ENCODE measurements at regions of chr7 and their contacts with region 1.

Region 1: DNA sequence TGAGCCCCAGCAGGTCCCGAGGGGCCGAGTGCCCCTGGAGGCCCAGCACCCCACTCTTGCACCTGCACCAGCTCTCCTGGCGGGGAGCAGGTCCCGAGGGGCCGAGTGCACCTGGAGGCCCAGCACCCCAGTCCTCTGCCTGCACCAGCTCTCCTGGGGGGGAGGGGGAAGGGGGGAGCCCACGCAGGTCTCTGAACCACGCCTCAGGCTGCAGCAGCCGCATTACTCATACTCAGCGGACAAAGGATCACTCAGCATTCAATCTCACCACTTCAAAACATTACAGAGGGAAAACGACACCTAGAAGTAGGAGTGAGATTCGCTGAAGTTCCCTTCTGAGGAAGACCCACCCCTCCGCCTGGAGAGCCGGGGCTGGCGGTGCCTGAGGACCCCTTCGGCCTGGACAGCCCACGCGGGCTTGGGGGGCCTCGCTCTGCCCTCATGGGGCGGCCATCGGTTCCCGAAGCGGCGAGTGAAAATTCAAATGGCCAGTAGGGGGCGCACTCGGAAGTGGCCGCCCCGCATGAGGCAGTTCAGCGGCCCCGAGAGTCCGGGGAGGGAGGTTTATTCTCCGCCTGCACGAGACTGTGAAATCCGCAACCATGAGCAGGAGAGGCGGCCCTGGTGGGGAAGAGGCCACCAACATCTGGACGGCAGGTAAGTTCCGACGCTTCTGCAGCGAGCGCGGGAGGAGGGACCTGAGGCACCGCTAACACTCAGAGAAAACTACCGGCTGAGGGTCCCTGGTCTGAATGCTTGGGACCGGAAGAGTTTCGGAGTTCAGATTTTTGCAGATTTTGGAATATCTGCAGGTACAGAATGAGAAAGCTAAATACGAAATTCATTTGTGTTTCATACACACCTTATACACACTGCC is 1.1 kb upstream of the GPER1 start:
- DNase-seq: peak; percentile 55
- H3K4me3 ChIP-seq: peak overlapping the region; percentile 10 to 26
- H3K27ac ChIP-seq: no peak overlapping the region
- H3K4me1 ChIP-seq: peaks cover 5% of the 10 kb centered on the region
- H3K27me3 ChIP-seq: no peaks in the 10 kb centered on the region
- CTCF ChIP-seq: peak; percentile 83 to 97 (median 88)
- POLR2A ChIP-seq: no peak

Region 2: GRCh38 chr7:1065263-1066260 is 21.3 kb before region 1 on chr7:
- intact Hi-C with region 1: no loop called
- DNase-seq: peak; percentile 78
- H3K4me3 ChIP-seq: no peak overlapping the region
- H3K27ac ChIP-seq: no peak overlapping the region
- H3K4me1 ChIP-seq: no peaks in the 10 kb centered on the region
- H3K27me3 ChIP-seq: no peaks in the 10 kb centered on the region
- CTCF ChIP-seq: peak; percentile 80 to 98 (median 94)
- POLR2A ChIP-seq: no peak

Region 3: GRCh38 chr7:1123715-1124114 is 36.9 kb after region 1 on chr7:
- intact Hi-C with region 1: loop called (anchors 1 kb)
- DNase-seq: no peak
- H3K4me3 ChIP-seq: no peak overlapping the region
- H3K27ac ChIP-seq: no peak overlapping the region
- H3K4me1 ChIP-seq: no peaks in the 10 kb centered on the region
- H3K27me3 ChIP-seq: no peaks in the 10 kb centered on the region
- CTCF ChIP-seq: peak in 3 of 4 experiments; percentile 26 to 59 (median 43)
- POLR2A ChIP-seq: no peak

Region 4: GRCh38 chr7:1175967-1176851 is 89.4 kb after region 1 on chr7:
- intact Hi-C with region 1: loop called (anchors 5 kb)
- DNase-seq: peak; percentile 64
- H3K4me3 ChIP-seq: no peak overlapping the region
- H3K27ac ChIP-seq: no peak overlapping the region
- H3K4me1 ChIP-seq: no peaks in the 10 kb centered on the region
- H3K27me3 ChIP-seq: no peaks in the 10 kb centered on the region
- CTCF ChIP-seq: peak; percentile 73 to 87 (median 82)
- POLR2A ChIP-seq: no peak

Measured in prostate gland (tissue), 2 donors.